ENCODE measurements at regions of chr17 and their contacts with region 1.

Region 1: DNA sequence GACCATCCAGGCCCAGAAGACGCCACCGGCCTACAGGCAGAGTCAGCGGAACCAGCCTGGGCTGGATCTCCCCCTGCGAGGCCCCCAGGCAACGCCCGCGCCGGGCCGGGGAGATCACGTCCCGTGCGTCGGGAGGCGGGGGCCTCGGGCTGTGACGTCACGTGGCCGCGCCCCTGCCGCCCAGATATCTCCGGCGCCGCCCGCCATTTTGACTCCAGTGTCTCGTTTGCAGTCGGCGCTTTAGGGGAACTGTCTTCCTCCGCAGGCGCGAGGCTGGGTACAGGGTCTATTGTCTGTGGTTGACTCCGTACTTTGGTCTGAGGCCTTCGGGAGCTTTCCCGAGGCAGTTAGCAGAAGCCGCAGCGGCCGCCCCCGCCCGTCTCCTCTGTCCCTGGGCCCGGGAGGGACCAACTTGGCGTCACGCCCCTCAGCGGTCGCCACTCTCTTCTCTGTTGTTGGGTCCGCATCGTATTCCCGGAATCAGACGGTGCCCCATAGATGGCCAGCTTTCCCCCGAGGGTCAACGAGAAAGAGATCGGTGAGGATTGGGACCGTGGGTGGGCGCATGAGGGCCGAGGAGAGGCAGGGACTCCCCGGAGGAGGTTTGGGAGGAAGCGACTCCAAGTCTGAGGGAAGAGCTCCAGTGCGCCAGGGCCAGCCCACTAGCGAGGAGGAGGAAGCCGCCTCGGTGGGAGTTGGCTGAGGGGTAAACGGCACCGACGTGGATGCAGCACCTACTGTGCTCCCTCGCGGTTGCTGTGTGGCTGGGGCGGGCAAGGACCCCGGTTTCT is at the start of gene WSB1:
- DNase-seq: peak; percentile 95
- ATAC-seq: peak; percentile 95 to 97
- H3K4me3 ChIP-seq: peak within 1 kb of the TSS; percentile 90
- H3K27ac ChIP-seq: peak within 1 kb of the TSS; percentile 99
- H3K4me1 ChIP-seq: peaks cover 39% of the 10 kb centered on the region
- H3K27me3 ChIP-seq: no peaks in the 10 kb centered on the region
- CTCF ChIP-seq: no peak
- total RNA-seq, gene WSB1: 282 TPM

Region 2: DNA sequence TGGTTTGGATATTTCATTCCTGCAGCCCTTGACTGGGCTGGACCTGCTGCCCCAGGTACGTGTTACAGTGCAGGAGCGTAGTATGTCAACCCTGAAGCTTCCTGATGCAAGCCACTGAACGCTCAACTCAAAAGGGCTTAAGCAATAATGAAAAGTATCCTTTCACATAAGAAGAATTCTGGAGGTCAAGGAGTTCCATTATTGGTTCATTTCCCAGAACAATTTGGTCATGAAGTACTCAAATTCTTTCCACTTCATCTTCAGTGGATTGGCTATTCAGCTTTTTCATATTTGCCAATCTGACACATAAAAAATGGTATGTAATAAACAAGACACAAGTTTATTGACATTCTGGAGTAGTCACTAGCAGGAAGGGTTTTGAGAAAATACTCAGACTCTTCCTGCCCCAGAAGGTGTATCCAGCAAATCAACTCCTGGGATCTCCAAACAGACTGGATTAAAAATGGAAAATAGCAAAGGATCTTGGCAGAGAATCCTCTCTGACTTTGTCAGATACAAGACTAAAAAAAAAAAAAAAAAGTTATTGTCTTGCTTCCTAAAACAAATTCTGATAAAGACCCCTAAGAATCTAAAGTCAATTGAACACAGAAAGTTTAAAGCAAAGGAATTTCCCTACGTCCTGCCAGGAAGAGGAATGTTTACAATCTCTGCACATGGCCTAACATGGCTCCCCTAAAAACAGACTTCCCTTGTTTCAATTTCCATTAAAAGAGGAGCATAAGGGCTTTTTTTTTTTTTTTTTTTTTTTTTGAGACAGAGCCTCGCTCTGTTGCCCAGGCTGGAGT is 37.7 kb before region 1 on chr17:
- intact Hi-C with region 1: loop called (anchors 5 kb)
- DNase-seq: no peak
- ATAC-seq: peak; percentile 95 to 97
- H3K4me3 ChIP-seq: no peak overlapping the region
- H3K27ac ChIP-seq: peak overlapping the region; percentile 73
- H3K4me1 ChIP-seq: peaks cover 17% of the 10 kb centered on the region
- H3K27me3 ChIP-seq: no peaks in the 10 kb centered on the region
- CTCF ChIP-seq: no peak

Region 3: DNA sequence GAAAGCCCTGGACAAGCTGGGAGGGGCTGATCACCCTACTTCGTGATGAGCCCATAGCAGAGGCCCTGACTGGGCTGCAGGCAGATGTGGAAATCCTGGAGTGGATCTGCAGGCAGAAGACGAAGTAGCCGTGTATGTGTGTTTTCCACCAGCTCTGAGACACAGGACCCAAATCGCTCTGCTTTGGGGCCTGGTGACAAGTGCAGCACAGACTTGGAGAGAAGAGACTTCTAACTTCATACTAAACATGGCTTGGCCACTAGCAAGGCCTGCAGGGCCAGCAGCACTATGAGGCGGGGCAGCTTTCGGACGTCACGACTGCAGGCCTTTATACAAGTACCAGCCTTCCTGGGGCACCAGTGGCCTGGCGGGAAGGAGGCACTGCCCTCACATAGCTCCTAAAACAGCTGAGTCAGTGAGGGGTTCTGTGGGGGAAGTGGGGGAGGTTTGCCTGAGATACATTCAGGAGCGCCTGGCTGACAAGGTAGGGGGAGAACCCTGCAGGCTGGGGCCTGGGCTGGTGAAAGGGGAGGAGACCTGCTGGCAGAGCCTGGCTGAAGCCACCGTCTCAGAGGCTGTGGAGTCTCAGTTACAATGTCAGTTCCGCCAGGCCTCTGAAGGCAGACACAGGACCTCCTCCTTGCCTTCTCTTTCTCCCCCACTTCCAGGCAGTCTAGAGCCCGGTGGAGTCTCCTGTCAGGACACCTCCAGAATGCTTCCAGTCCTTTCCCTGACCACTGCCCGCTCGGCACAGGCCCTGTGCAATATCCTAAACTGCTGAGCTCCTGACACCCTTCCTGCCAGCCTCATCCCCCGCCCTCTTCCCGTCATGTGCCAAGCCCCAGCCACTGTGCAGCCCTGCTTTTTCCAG is 73.3 kb after region 1 on chr17:
- intact Hi-C with region 1: no loop called
- DNase-seq: no peak
- ATAC-seq: no peak
- H3K4me3 ChIP-seq: no peak overlapping the region
- H3K27ac ChIP-seq: no peak overlapping the region
- H3K4me1 ChIP-seq: no peaks in the 10 kb centered on the region
- H3K27me3 ChIP-seq: no peaks in the 10 kb centered on the region
- CTCF ChIP-seq: no peak

Region 4: GRCh38 chr17:27396941-27397340 is 102.8 kb after region 1 on chr17:
- intact Hi-C with region 1: no loop called
- DNase-seq: no peak
- ATAC-seq: peak; percentile 55 to 74
- H3K4me3 ChIP-seq: no peak overlapping the region
- H3K27ac ChIP-seq: no peak overlapping the region
- H3K4me1 ChIP-seq: peaks cover 14% of the 10 kb centered on the region
- H3K27me3 ChIP-seq: no peaks in the 10 kb centered on the region
- CTCF ChIP-seq: no peak

Measured in lower lobe of right lung (tissue), 2 donors.